Activated naive CD4-positive, alpha-beta T cell treated with anti-CD3 and anti-CD28 coated beads for 36 hours (primary cell): ENCODE measurements at regions of chr22 and their contacts with region 1.

Region 1: DNA sequence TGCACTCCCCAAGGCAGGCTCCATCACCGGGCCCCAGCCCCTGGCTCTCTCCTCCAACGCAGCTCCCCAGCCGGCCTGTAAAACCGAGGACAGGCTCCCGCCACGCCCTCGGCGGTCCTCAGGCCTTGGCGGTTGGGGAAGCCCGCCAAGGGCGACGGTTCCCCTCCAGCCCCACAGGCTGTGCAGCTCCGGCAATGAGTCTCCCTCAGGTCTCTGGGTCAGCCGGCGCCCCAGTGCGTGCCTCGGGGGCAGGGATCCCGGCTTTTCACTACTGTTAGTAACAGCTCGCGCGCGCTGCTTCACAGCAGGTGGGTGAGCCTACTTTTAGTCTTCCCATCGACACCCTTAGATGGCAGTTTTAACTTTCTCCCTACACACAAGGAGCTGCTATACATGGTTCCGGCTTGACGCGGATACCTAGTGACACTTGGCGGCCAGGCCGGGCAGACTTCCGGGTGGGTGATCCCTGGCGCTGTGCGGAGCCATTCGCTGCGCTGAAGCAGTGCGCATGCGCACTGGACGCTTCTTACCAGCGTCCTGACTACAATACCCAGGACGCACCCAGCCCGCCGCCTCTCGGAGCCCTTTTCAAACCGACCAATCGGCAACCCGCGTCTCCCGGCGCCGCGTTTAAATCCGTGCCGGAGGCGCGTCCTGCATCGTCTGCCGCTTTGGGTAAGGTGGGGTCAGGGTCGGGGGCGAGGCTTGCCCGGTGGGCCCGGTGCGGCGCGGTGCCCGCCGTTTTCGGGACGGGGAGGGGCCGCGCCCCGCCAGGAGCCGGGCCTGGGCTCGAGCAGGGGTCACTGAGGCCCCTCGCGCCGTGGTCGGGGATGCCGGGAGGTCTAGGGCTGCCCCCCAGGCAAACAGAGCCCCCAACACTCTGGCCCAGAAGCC is at the start of gene GTSE1:
- DNase-seq: peak; percentile 99
- H3K4me3 Mint-ChIP-seq: peak within 1 kb of the TSS; percentile 93
- H3K27ac Mint-ChIP-seq: peak within 1 kb of the TSS; percentile 90
- H3K4me1 Mint-ChIP-seq: peaks cover 25% of the 10 kb centered on the region
- H3K27me3 Mint-ChIP-seq: peaks cover 7% of the 10 kb centered on the region
- total RNA-seq, gene GTSE1: 39.7 to 39.8 TPM

Region 2: DNA sequence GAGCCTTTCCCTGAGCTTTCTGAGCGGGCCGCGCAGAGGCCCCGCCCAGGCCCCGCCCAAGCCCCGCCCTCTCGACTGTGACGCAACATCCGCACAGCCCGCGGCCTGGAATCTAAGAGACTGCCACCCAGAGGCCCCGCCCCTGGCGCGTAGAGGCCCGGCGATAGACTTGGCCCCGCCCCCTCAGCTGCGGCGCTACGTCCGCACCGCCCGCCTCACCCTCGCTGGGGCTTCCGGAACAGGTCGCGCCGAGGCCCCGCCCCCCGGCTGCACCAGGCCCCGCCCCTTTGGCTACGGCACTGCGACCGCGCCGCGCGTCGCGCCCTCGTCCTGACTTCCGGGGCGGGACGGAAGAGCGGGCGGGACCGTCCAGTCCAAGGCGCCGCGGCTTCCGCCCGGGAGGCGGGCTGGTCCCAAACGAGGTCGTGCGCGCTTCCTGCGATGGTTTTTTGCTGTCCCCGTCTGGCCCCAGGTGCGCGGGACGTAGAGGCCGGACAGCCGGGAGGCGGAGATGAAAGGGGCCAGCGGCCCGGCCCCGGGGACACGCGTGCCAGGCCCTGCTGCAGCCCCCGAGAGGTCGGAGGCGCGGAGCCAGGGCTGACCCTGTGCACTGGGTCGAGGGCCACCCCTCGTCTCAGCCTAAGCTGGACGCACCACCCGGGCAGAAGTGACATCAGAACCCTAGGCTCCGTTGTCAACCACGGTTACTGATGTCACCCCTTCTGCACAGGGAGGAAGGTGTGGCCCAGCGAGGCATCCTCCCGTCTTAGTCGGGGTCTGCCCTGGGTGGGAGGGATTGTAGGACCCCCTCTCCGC is 260.6 kb before region 1 on chr22:
- CTCF ChIA-PET with region 1: no interaction called
- intact Hi-C with region 1: loop called (anchors 1 kb)
- DNase-seq: peak; percentile 100
- H3K4me3 Mint-ChIP-seq: peak overlapping the region; percentile 86
- H3K27ac Mint-ChIP-seq: peak overlapping the region; percentile 85
- H3K4me1 Mint-ChIP-seq: peaks cover 15% of the 10 kb centered on the region
- H3K27me3 Mint-ChIP-seq: no peaks in the 10 kb centered on the region

Region 3: DNA sequence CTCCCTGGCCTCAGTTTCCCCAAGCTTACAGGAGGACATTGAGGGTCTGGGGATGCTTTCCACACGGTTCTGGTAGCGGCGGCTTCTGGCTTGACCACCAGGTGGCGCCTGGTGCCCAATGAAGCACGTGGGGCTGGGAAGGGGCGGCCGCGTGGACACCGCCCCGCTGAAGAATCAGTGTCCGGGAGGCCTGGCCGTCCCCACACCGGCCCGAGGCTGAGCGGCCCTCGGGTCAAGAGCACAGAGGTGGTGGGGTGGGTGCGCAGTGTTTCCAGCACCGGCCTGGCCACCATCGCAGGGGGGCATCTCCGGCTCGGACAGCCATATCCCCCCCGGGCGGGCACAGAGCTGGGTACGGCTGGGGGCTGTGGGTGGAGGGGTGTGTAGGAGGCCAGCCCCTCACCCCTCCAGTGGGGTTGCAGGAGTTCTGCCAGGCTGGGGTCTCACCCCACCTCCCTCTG is 174.0 kb before region 1 on chr22:
- CTCF ChIA-PET with region 1: interaction called, 10 read pairs
- intact Hi-C with region 1: loop called (anchors 1 kb)
- DNase-seq: peak; percentile 80
- H3K4me3 Mint-ChIP-seq: no peak overlapping the region
- H3K27ac Mint-ChIP-seq: no peak overlapping the region
- H3K4me1 Mint-ChIP-seq: no peaks in the 10 kb centered on the region
- H3K27me3 Mint-ChIP-seq: no peaks in the 10 kb centered on the region

Region 4: DNA sequence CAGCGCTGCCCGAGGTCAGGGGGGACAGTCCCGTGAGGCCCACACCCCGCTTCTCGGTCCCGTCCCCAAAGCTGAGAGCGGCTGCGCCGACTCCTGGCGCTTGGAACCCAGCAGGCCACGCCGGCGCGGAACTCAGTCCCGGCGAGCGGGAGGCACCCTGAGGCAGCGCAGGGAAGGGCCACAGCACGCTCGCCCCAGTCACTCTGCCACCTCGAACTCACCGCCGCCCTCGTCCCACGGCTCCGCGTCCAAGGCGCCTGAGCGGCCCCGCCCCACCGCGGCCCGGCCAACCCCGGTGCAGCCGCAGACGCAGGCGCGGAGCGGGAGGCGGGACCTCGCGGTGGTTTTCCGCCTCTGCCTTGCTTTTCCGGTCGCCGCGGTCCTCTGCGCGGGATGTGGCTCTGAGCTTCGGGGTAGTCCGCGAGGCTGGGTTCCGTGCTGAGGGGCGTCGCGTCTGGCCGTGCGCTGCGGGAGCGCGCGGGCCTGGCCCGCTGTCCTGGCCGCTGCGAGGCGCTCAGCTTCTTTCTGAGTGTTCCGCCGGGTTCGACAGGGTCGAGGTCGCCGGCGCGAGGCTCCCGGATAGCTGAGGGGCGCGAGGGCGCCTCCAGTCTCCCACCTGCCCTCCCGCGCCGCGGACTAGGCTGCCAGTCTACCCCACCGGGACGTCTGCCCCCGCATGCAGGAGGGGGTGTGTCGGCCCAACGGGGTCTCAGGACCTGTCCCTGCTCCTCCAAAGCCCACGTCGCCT is 46.3 kb before region 1 on chr22 and contains the start of gene CDPF1:
- CTCF ChIA-PET with region 1: no interaction called
- intact Hi-C with region 1: loop called (anchors 1 kb)
- DNase-seq: peak; percentile 91
- H3K4me3 Mint-ChIP-seq: peak within 1 kb of the TSS; percentile 80
- H3K27ac Mint-ChIP-seq: peak within 1 kb of the TSS; percentile 41
- H3K4me1 Mint-ChIP-seq: peaks cover 26% of the 10 kb centered on the region
- H3K27me3 Mint-ChIP-seq: no peaks in the 10 kb centered on the region
- total RNA-seq, gene CDPF1: 6.9 to 8.0 TPM

Region 5: GRCh38 chr22:46328782-46329181 is 32.3 kb after region 1 on chr22:
- CTCF ChIA-PET with region 1: no interaction called
- intact Hi-C with region 1: no loop called
- DNase-seq: no peak
- H3K4me3 Mint-ChIP-seq: no peak overlapping the region
- H3K27ac Mint-ChIP-seq: no peak overlapping the region
- H3K4me1 Mint-ChIP-seq: no peaks in the 10 kb centered on the region
- H3K27me3 Mint-ChIP-seq: no peaks in the 10 kb centered on the region

Region 6: GRCh38 chr22:46352691-46353386 is 56.3 kb after region 1 on chr22:
- CTCF ChIA-PET with region 1: no interaction called
- intact Hi-C with region 1: no loop called
- DNase-seq: no peak
- H3K4me3 Mint-ChIP-seq: no peak overlapping the region
- H3K27ac Mint-ChIP-seq: no peak overlapping the region
- H3K4me1 Mint-ChIP-seq: no peaks in the 10 kb centered on the region
- H3K27me3 Mint-ChIP-seq: no peaks in the 10 kb centered on the region

Region 7: DNA sequence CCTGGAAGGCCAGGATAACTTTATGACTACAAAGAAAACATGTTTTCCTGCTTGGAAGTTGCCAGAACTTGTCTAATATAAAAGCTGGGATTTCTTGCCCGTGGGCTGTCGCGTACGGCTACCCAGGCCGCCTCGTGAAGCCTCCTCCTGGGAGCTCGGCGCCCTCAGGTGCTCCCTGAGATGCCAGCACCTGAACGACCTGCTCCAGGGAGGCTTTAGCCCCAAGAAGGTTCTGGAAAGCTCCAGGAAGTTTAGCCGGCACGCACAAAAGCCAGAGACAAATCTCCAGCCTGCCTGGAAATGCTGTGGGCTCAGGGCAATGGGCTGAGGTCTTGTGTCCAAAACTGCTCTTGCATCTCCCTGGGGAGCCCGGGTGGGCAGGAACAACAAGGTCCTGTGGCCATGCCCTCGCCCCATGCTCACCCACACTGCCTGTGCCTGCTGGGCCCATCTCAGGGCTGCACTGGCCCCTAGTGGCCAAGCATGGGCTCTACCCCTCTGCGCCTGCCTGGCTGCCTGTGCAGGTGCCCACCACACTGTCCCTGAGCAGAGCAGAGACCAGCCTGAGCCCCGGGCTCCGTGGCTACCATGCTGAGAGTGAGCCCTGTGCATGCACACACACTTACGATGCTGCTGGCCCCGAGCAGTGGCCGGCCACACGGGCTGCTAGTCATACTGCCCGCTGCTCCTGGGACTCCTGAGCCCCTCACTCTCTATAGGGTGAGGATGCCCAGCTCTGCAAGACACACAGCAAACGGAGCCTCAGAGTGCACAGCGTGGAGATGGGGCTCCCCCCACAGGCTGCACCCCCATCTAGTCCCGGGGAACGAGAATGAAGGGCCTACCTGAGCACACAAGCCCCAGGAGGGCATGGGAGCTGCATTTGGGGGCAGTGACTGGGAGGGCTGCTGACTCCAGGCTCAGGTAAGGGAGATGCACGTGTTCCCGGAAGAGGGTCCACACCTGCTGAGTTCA is 245.8 kb after region 1 on chr22:
- CTCF ChIA-PET with region 1: no interaction called
- intact Hi-C with region 1: loop called (anchors 5 kb)
- DNase-seq: peak; percentile 79
- H3K4me3 Mint-ChIP-seq: no peak overlapping the region
- H3K27ac Mint-ChIP-seq: no peak overlapping the region
- H3K4me1 Mint-ChIP-seq: peaks cover 12% of the 10 kb centered on the region
- H3K27me3 Mint-ChIP-seq: peaks cover 21% of the 10 kb centered on the region

Region 8: GRCh38 chr22:46587492-46588278 is 291.2 kb after region 1 on chr22:
- CTCF ChIA-PET with region 1: no interaction called
- intact Hi-C with region 1: no loop called
- DNase-seq: peak; percentile 55
- H3K4me3 Mint-ChIP-seq: no peak overlapping the region
- H3K27ac Mint-ChIP-seq: no peak overlapping the region
- H3K4me1 Mint-ChIP-seq: peaks cover 24% of the 10 kb centered on the region
- H3K27me3 Mint-ChIP-seq: no peaks in the 10 kb centered on the region